Common myeloid progenitor, CD34-positive (primary cell): ENCODE measurements at regions of chr7 and their contacts with region 1.

Region 1: DNA sequence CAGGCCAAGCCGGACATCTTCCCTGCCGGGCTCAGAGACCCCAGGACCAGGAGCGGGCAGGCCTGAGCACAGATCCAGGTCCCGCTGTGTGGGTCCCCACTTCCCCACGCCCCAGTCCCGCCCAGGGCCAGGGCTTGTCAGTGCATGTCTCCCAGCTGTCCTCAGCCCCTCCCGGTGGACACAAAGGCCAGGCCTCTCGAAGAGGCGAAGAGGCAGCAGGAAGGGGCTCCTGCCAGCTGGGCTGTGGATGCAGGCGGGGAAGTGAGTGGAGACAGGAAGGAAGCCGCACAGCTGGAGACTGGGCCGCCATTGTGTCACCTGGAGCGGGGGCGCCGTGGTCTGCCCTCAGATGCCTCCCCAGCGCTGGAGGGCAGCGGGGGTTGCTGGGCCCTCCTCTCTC is 4.8 kb downstream of the GRIFIN start:
- DNase-seq: peak in 2 of 3 donors; percentile 60 to 78
- H3K4me3 ChIP-seq: peak overlapping the region in 2 of 7 experiments; percentile 13 to 28
- H3K27ac ChIP-seq: no peak overlapping the region
- H3K4me1 ChIP-seq: peaks cover 0 to 17% (median 10%) of the 10 kb centered on the region in 4 experiments
- H3K27me3 ChIP-seq: no peaks in the 10 kb centered on the region

Region 2: DNA sequence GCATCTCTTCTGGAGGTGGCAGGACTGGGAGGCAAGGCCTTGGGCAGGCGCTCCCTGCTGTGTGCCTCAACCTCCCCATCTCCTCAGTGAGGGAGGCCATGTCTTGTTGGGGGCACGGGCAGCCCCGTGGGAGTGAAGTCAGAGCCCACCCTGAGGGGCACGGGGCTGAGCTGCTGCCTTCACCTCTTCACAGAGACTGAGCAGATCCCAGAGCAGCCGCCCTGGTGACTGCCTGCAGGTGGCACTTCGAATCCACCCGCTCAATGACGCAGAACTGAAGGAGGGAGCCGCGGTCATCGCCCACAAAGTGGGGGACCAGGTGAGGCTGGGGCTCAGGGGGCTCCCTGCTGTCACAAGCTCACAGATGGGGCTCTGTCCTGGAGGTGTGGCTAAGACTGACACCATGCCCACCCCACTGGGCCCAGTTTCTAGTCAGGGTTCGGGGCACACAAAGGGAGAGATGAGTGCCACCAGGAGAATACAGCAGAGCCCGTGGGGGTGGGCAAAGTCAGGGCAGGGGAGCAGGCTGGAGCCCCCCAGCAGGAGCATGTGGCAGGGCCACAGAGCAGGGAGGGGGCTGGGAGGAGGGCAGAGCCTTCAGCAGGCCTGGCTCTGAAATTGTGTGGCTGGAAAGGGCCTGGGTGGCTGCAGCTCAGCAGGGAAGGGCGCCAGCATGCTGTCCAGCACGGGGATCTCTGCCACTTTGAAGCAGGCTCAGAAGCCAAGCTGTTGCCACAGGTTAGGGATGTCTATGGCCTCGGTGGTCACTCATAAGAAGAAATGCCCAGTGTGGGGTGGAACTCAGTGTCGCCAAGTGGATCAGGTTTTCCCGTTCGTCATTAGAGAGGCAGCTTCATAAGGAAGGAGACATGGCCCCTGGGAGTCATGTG is 86.8 kb before region 1 on chr7:
- CTCF ChIA-PET with region 1: interaction called, 21 read pairs
- POLR2A ChIA-PET with region 1: no interaction called
- DNase-seq: peak in 2 of 3 donors; percentile 41 to 48
- H3K4me3 ChIP-seq: no peak overlapping the region
- H3K27ac ChIP-seq: no peak overlapping the region
- H3K4me1 ChIP-seq: peaks cover 0 to 19% (median 9%) of the 10 kb centered on the region in 4 experiments
- H3K27me3 ChIP-seq: no peaks in the 10 kb centered on the region

Region 3: GRCh38 chr7:2411815-2412586 is 59.4 kb before region 1 on chr7:
- CTCF ChIA-PET with region 1: interaction called, 10 read pairs
- POLR2A ChIA-PET with region 1: no interaction called
- DNase-seq: no peak
- H3K4me3 ChIP-seq: peak overlapping the region in 2 of 7 experiments; percentile 33 to 52
- H3K27ac ChIP-seq: no peak overlapping the region
- H3K4me1 ChIP-seq: peaks cover 28 to 92% (median 75%) of the 10 kb centered on the region in 4 experiments
- H3K27me3 ChIP-seq: no peaks in the 10 kb centered on the region

Region 4: GRCh38 chr7:2444476-2444875 is 26.9 kb before region 1 on chr7:
- CTCF ChIA-PET with region 1: interaction called, 219 read pairs
- POLR2A ChIA-PET with region 1: interaction called, 3 read pairs
- DNase-seq: no peak
- H3K4me3 ChIP-seq: no peak overlapping the region
- H3K27ac ChIP-seq: no peak overlapping the region
- H3K4me1 ChIP-seq: peaks cover 0 to 12% (median 0%) of the 10 kb centered on the region in 4 experiments
- H3K27me3 ChIP-seq: no peaks in the 10 kb centered on the region

Region 5: GRCh38 chr7:2451171-2452073 is 20.0 kb before region 1 on chr7:
- CTCF ChIA-PET with region 1: interaction called, 219 read pairs
- POLR2A ChIA-PET with region 1: interaction called, 4 read pairs
- DNase-seq: peak; percentile 67 to 79 (median 77)
- H3K4me3 ChIP-seq: peak overlapping the region in 6 of 7 experiments; percentile 44 to 77 (median 60)
- H3K27ac ChIP-seq: peak overlapping the region in 1 of 2 experiments; percentile 14
- H3K4me1 ChIP-seq: peaks cover 0 to 15% (median 12%) of the 10 kb centered on the region in 4 experiments
- H3K27me3 ChIP-seq: no peaks in the 10 kb centered on the region

Region 6: GRCh38 chr7:2460188-2460587 is 11.2 kb before region 1 on chr7:
- CTCF ChIA-PET with region 1: interaction called, 219 read pairs
- POLR2A ChIA-PET with region 1: no interaction called
- DNase-seq: no peak
- H3K4me3 ChIP-seq: no peak overlapping the region
- H3K27ac ChIP-seq: no peak overlapping the region
- H3K4me1 ChIP-seq: peaks cover 0 to 3% (median 0%) of the 10 kb centered on the region in 4 experiments
- H3K27me3 ChIP-seq: no peaks in the 10 kb centered on the region

Region 7: DNA sequence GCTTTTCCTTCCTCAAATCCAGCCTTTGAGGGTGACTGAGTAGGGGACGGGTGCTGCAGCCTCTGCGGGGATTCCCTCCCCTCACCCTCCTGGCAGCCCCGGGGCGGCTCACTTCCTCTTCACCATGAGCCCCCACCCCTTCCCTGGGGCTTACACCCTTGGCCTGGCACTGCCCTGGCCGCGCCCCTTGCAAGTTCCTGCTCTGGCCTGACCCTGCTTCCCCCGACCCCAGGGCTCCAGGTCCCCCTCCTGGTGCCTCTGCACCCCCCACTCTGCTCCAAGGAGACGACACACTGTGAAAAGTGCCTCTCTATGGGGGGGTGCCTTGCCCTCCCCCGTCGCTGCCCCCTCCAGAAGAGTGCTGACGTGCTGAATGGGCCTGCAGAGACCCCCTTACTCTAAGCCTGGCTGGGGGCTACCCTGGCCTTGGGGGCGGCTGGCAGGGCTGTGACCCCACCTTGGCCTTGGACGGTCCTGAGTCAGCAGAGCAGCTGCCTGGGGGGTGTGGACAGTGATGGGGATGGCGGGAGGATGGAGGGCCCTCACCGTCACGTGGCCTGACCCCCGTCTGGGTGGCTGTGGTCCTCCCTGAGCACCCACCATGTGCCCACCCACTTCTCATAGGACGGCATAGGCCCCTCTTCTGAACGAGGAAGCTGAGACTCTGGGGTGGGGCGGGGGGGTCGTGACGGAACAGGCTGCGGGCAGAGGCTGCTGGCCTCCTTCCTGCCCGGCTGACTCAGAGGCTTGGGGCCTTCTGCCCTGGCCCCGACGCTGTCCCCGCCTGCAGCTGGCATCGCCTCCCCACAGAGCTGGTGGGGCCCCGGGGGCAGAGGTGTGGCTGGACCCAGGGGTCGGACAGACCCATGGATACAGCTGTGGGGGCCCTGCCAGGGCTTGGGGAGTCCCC is 58.0 kb after region 1 on chr7:
- CTCF ChIA-PET with region 1: interaction called, 10 read pairs
- POLR2A ChIA-PET with region 1: no interaction called
- DNase-seq: peak; percentile 88 to 97 (median 96)
- H3K4me3 ChIP-seq: peak overlapping the region in 5 of 7 experiments; percentile 27 to 66 (median 50)
- H3K27ac ChIP-seq: peak overlapping the region; percentile 68 to 87
- H3K4me1 ChIP-seq: peaks cover 6 to 71% (median 66%) of the 10 kb centered on the region in 4 experiments
- H3K27me3 ChIP-seq: no peaks in the 10 kb centered on the region

Region 8: GRCh38 chr7:2577914-2578680 is 106.7 kb after region 1 on chr7:
- CTCF ChIA-PET with region 1: no interaction called
- POLR2A ChIA-PET with region 1: no interaction called
- DNase-seq: no peak
- H3K4me3 ChIP-seq: no peak overlapping the region
- H3K27ac ChIP-seq: no peak overlapping the region
- H3K4me1 ChIP-seq: peaks cover 0 to 5% (median 2%) of the 10 kb centered on the region in 4 experiments
- H3K27me3 ChIP-seq: no peaks in the 10 kb centered on the region